ENCODE measurements at regions of chr6 and their contacts with region 1.

Region 1: DNA sequence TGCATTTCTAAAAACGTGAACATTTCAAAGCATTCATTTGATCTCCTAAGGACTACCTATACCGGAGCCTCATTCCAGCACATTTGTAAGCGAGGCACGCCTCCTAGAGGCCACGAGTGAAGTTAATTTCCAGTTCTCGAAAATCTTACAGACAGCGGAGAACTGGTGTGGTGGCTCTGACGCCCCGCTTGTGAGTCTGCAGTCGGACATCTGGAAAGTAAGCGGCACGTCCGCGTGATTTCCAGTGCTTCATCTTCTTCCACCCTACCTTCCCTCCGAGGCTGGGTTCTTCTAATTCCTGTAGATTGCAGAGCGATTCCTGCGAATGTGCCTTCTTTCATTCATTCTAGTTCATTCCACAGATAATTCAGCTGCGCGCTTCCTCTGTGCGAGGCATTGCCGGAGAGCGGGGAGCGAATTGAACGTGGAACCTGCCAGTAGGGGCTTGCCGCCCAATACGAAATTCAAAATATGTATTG is 810 bp upstream of the PRIM2 start:
- DNase-seq: peak; percentile 90
- ATAC-seq: peak; percentile 88
- H3K4me3 Mint-ChIP-seq: peak overlapping the region; percentile 99
- H3K27ac Mint-ChIP-seq: peak overlapping the region; percentile 98
- H3K4me1 Mint-ChIP-seq: peaks cover 31% of the 10 kb centered on the region
- H3K27me3 Mint-ChIP-seq: no peaks in the 10 kb centered on the region

Region 2: GRCh38 chr6:56637640-56638039 is 679.0 kb before region 1 on chr6:
- CTCF ChIA-PET with region 1: no interaction called
- POLR2A ChIA-PET with region 1: no interaction called
- intact Hi-C with region 1: loop called in 1 of 2 experiments (anchors 5 kb)
- DNase-seq: no peak
- ATAC-seq: no peak
- H3K4me3 Mint-ChIP-seq: no peak overlapping the region
- H3K27ac Mint-ChIP-seq: no peak overlapping the region
- H3K4me1 Mint-ChIP-seq: no peaks in the 10 kb centered on the region
- H3K27me3 Mint-ChIP-seq: no peaks in the 10 kb centered on the region

Region 3: DNA sequence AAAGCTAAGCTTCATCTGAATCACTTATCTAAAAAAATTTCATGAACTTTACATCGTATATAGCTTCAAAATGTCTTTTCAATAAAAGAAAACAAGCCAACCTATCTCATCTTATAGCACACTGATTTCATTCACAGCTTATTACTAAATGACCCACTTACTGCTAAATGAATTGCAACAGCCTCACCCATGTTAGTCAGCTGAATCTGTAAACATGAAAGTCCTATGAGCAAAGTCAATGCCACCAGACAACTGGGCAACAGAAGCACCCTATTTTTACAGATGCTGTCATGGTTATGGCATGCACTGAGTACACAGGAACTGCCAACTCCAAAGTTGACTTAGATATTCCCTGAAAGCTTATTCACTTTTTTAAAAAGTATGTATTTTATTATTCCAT is 632.7 kb before region 1 on chr6:
- CTCF ChIA-PET with region 1: no interaction called
- POLR2A ChIA-PET with region 1: no interaction called
- intact Hi-C with region 1: no loop called
- DNase-seq: no peak
- ATAC-seq: no peak
- H3K4me3 Mint-ChIP-seq: no peak overlapping the region
- H3K27ac Mint-ChIP-seq: no peak overlapping the region
- H3K4me1 Mint-ChIP-seq: no peaks in the 10 kb centered on the region
- H3K27me3 Mint-ChIP-seq: peaks cover 4% of the 10 kb centered on the region

Region 4: DNA sequence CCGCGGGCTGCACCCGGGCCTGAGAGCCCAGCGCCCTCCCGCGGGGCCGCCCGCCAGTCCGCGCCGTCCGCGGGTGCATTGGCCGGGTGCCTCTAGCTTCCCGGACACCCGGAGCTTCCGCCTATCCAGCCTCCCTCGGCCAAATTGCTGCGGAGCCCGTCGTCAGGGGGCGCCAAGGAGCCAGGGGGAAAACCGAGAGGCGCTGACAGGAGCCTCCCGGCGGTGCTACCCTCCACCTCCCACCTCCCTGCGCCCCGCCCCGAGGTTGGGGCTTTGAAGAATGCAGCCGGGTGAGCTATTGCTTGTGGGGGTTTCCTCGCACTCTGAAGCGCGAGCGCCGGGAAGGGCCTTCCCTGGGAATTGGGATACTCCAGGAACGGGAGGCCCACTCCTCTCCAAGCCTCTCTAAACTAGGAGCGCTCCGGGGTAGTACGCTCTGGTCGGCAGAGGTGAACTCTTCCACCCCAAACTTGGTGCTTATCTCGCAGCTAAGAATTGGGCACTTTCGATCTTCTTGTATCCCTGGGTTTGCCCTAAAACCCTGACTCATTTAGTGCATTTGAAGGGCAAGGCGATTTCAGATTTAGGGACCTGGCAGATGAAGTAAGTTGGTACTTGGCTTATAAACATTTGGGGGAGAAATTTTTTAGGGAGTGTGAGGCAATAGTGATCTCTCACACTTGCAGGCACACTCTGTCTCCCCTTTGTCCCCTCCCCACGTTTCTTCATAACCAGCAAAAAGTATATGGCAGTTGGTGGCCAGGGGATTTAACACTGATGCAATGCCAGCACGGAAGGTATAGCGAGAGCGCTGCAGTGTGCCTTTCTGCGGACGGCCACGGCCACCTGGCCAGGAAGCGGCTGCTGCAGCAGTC is 361.2 kb before region 1 on chr6:
- CTCF ChIA-PET with region 1: interaction called, 8 read pairs
- POLR2A ChIA-PET with region 1: no interaction called
- intact Hi-C with region 1: loop called (anchors 1 to 2 kb)
- DNase-seq: peak; percentile 84
- ATAC-seq: peak; percentile 71
- H3K4me3 Mint-ChIP-seq: peak overlapping the region; percentile 59
- H3K27ac Mint-ChIP-seq: no peak overlapping the region
- H3K4me1 Mint-ChIP-seq: peaks cover 20% of the 10 kb centered on the region
- H3K27me3 Mint-ChIP-seq: peaks cover 56% of the 10 kb centered on the region

Region 5: GRCh38 chr6:57089687-57090460 is 226.7 kb before region 1 on chr6 and contains the start of gene ZNF451:
- CTCF ChIA-PET with region 1: interaction called, 9 read pairs
- POLR2A ChIA-PET with region 1: no interaction called
- intact Hi-C with region 1: loop called (anchors 1 kb)
- DNase-seq: peak; percentile 98
- ATAC-seq: peak; percentile 95
- H3K4me3 Mint-ChIP-seq: peak within 1 kb of the TSS; percentile 73
- H3K27ac Mint-ChIP-seq: peak within 1 kb of the TSS; percentile 82
- H3K4me1 Mint-ChIP-seq: peaks cover 32% of the 10 kb centered on the region
- H3K27me3 Mint-ChIP-seq: no peaks in the 10 kb centered on the region
- total RNA-seq, gene ZNF451: 46.8 to 60.3 TPM

Region 6: GRCh38 chr6:57221936-57222742 is 94.5 kb before region 1 on chr6 and contains the start of gene RAB23:
- CTCF ChIA-PET with region 1: interaction called, 4 read pairs
- POLR2A ChIA-PET with region 1: no interaction called
- intact Hi-C with region 1: loop called (anchors 1 to 2 kb)
- DNase-seq: peak; percentile 88
- ATAC-seq: peak; percentile 93
- H3K4me3 Mint-ChIP-seq: peak within 1 kb of the TSS; percentile 92
- H3K27ac Mint-ChIP-seq: peak within 1 kb of the TSS; percentile 93
- H3K4me1 Mint-ChIP-seq: peaks cover 16% of the 10 kb centered on the region
- H3K27me3 Mint-ChIP-seq: peaks cover 4% of the 10 kb centered on the region
- total RNA-seq, gene RAB23: 1.4 to 1.5 TPM